ENCODE measurements at regions of chr16 and their contacts with region 1.

Region 1: DNA sequence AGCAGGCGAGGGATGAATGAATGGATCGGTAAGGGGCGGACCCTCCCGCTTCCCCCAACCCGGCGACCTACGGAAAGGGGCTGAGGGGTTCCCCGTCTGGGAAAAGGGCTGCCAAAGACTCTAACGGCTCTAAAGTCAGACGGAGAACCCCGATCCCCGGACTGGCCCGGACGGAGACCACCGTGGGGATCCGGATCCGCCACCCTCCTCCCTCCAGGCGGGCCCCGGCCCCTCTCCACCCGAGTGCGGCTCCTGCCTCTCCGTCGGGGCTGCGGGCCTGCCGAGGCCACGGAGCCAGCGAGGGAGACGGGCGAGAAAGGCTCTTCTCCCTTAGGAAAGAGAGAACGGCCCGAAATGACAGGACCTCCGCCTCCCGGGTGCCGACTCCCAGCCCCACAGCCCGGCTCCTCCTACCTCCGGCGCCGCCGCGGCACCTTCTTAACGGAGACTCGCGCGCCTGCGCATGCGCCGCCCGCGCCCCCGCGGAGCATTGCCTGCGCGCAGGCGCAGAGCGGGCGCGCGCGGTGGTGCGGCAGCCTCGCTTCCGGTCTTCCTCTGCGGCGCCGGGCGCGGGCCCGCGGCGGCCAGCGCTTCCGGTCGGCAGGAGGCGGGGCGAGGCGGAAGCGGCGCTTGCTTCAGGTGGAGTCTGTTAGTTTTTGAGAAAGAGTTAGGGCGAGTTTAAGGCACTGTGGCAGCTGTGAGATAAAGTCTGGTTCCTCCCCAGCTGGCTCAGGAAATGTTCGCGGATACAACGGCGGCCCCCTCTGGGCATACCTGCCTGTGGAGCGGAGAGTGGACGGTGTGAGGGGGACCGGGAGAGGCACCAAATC is at the start of gene SLX4:
- DNase-seq: peak; percentile 79 to 98 (median 91)
- ATAC-seq: peak; percentile 87
- H3K4me3 ChIP-seq: peak within 1 kb of the TSS; percentile 80 to 96
- H3K4me3 Mint-ChIP-seq: peak within 1 kb of the TSS; percentile 99
- H3K27ac ChIP-seq: peak within 1 kb of the TSS; percentile 78 to 89
- H3K27ac Mint-ChIP-seq: peak within 1 kb of the TSS; percentile 99
- H3K4me1 ChIP-seq: peaks cover 26% of the 10 kb centered on the region
- H3K4me1 Mint-ChIP-seq: peaks cover 49% of the 10 kb centered on the region
- H3K27me3 ChIP-seq: no peaks in the 10 kb centered on the region
- H3K27me3 Mint-ChIP-seq: no peaks in the 10 kb centered on the region
- CTCF ChIP-seq: no peak
- total RNA-seq, gene SLX4: 5.1 to 5.2 TPM

Region 2: GRCh38 chr16:3106205-3106928 is 505.0 kb before region 1 on chr16:
- CTCF ChIA-PET with region 1: no interaction called
- POLR2A ChIA-PET with region 1: no interaction called
- intact Hi-C with region 1: loop called in 1 of 2 experiments (anchors 1 kb)
- DNase-seq: peak; percentile 79 to 95 (median 90)
- ATAC-seq: peak; percentile 94
- H3K4me3 ChIP-seq: peak overlapping the region; percentile 74 to 77
- H3K4me3 Mint-ChIP-seq: peak overlapping the region; percentile 86
- H3K27ac ChIP-seq: peak overlapping the region; percentile 75 to 93
- H3K27ac Mint-ChIP-seq: peak overlapping the region; percentile 89
- H3K4me1 ChIP-seq: peaks cover 24% of the 10 kb centered on the region
- H3K4me1 Mint-ChIP-seq: peaks cover 26% of the 10 kb centered on the region
- H3K27me3 ChIP-seq: no peaks in the 10 kb centered on the region
- H3K27me3 Mint-ChIP-seq: no peaks in the 10 kb centered on the region
- CTCF ChIP-seq: no peak

Region 3: DNA sequence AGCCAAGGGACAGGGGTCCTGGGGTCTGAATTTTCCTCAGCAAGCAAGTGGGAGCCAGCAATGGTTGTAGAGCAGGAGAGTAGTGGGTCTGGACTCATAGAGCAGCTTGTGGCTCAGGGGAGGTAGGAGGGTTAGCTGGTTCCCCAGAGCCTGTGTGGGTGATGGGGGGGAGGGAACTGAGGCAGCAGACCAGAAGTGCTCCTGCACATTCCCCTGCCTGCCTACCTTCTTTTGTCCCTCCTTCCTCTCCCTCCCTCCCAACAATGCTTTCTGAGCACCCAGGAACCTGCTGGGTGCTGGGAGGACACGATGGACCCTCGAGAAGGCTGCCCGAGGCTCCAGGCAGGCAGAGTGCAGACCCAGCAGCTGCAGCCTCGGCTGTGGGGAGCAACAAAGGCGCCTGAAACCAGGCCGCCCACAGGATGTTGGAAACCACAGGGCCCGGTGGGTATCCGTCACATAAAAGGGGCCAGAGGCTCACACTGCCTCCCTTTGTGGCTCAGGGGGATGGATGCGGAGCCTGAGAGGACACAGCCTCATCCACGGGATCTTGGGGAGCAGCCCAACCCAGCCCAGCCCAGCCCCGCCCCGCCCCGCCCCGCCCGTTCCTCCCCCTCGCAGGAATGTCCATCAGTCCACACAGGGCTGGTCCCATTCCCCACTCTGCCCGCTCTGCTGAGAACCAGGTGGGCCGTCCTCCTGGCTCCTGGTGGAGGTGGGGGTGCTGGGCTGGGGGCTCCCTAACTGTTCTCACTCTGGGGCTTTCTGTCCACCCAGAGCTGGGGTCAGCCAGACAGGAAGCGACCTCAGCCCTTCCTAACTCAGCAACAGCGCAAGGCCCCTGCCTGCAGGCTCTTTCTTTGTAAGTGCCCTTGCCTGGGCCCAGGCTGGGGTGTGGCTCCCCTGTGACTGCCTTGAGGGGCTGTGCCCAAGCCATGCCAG is 32.5 kb before region 1 on chr16:
- CTCF ChIA-PET with region 1: no interaction called
- POLR2A ChIA-PET with region 1: interaction called, 3 read pairs
- intact Hi-C with region 1: loop called (anchors 1 to 2 kb)
- DNase-seq: peak; percentile 16 to 81 (median 62)
- ATAC-seq: peak; percentile 30
- H3K4me3 ChIP-seq: peak overlapping the region; percentile 35 to 47
- H3K4me3 Mint-ChIP-seq: peak overlapping the region; percentile 85
- H3K27ac ChIP-seq: peak overlapping the region; percentile 75 to 84
- H3K27ac Mint-ChIP-seq: peak overlapping the region; percentile 91
- H3K4me1 ChIP-seq: peaks cover 44% of the 10 kb centered on the region
- H3K4me1 Mint-ChIP-seq: peaks cover 49% of the 10 kb centered on the region
- H3K27me3 ChIP-seq: no peaks in the 10 kb centered on the region
- H3K27me3 Mint-ChIP-seq: no peaks in the 10 kb centered on the region
- CTCF ChIP-seq: no peak

Region 4: GRCh38 chr16:3625911-3626732 is 14.8 kb after region 1 on chr16:
- CTCF ChIA-PET with region 1: no interaction called
- POLR2A ChIA-PET with region 1: no interaction called
- intact Hi-C with region 1: no loop called
- DNase-seq: peak in 2 of 9 experiments; percentile 27 to 44
- ATAC-seq: peak; percentile 85
- H3K4me3 ChIP-seq: no peak overlapping the region
- H3K4me3 Mint-ChIP-seq: peak overlapping the region; percentile 13
- H3K27ac ChIP-seq: peak overlapping the region; percentile 18 to 37
- H3K27ac Mint-ChIP-seq: peak overlapping the region; percentile 89
- H3K4me1 ChIP-seq: peaks cover 25% of the 10 kb centered on the region
- H3K4me1 Mint-ChIP-seq: peaks cover 38% of the 10 kb centered on the region
- H3K27me3 ChIP-seq: no peaks in the 10 kb centered on the region
- H3K27me3 Mint-ChIP-seq: no peaks in the 10 kb centered on the region
- CTCF ChIP-seq: no peak

Region 5: GRCh38 chr16:3717235-3718018 is 106.1 kb after region 1 on chr16 and contains the start of gene TRAP1:
- CTCF ChIA-PET with region 1: no interaction called
- POLR2A ChIA-PET with region 1: no interaction called
- intact Hi-C with region 1: loop called in 1 of 2 experiments (anchors 1 kb)
- DNase-seq: peak; percentile 85 to 96 (median 91)
- ATAC-seq: peak; percentile 97
- H3K4me3 ChIP-seq: peak within 1 kb of the TSS; percentile 94 to 96
- H3K4me3 Mint-ChIP-seq: peak within 1 kb of the TSS; percentile 91
- H3K27ac ChIP-seq: peak within 1 kb of the TSS; percentile 84 to 88
- H3K27ac Mint-ChIP-seq: peak within 1 kb of the TSS; percentile 92
- H3K4me1 ChIP-seq: peaks cover 15% of the 10 kb centered on the region
- H3K4me1 Mint-ChIP-seq: peaks cover 38% of the 10 kb centered on the region
- H3K27me3 ChIP-seq: no peaks in the 10 kb centered on the region
- H3K27me3 Mint-ChIP-seq: no peaks in the 10 kb centered on the region
- CTCF ChIP-seq: no peak
- total RNA-seq, gene TRAP1: 48.3 to 57.4 TPM

Region 6: GRCh38 chr16:3961449-3961849 is 350.1 kb after region 1 on chr16:
- CTCF ChIA-PET with region 1: no interaction called
- POLR2A ChIA-PET with region 1: no interaction called
- intact Hi-C with region 1: loop called in 1 of 2 experiments (anchors 5 kb)
- DNase-seq: no peak
- ATAC-seq: no peak
- H3K4me3 ChIP-seq: no peak overlapping the region
- H3K4me3 Mint-ChIP-seq: peak overlapping the region; percentile 83
- H3K27ac ChIP-seq: no peak overlapping the region
- H3K27ac Mint-ChIP-seq: no peak overlapping the region
- H3K4me1 ChIP-seq: peaks cover 18% of the 10 kb centered on the region
- H3K4me1 Mint-ChIP-seq: peaks cover 20% of the 10 kb centered on the region
- H3K27me3 ChIP-seq: peaks cover 0 to 4% of the 10 kb centered on the region in 2 experiments
- H3K27me3 Mint-ChIP-seq: peaks cover 10% of the 10 kb centered on the region
- CTCF ChIP-seq: no peak

Measured in CD8-positive, alpha-beta T cell (primary cell).